ENCODE measurements at regions of chr4 and their contacts with region 1.

Region 1: DNA sequence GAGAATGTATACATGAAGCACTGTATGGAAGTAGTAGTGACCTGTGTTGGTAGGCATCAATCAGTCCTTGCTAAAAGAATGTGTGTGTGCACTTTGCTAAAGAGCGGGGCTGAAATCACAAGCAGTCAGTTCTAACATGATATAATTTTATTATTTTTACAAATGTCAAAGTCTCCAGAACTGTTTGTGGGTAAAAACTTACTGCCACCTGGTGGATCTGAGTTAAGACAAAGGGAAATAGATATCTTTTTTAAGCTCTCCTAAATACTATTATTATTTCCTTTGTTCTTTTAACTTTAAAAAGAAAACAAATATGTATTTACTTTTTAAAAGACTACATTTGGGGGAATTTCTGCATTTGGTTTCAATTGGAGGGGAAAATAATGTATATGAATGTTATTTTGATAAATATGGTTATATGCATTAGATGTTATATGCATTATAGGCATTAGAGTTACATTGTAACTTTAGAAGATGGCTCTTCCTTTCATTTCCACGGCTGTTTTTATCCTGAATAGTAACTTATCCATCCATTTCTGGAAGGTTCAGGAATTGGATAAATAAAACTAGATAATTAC is 7.8 kb upstream of the CLOCK start:
- DNase-seq: no peak
- H3K4me3 ChIP-seq: no peak overlapping the region
- H3K27me3 ChIP-seq: 0 out of 2 replicates have a peak, but pooled peaks cover 2% of the 10 kb centered on the region
- CTCF ChIP-seq: peak; percentile 51

Region 2: DNA sequence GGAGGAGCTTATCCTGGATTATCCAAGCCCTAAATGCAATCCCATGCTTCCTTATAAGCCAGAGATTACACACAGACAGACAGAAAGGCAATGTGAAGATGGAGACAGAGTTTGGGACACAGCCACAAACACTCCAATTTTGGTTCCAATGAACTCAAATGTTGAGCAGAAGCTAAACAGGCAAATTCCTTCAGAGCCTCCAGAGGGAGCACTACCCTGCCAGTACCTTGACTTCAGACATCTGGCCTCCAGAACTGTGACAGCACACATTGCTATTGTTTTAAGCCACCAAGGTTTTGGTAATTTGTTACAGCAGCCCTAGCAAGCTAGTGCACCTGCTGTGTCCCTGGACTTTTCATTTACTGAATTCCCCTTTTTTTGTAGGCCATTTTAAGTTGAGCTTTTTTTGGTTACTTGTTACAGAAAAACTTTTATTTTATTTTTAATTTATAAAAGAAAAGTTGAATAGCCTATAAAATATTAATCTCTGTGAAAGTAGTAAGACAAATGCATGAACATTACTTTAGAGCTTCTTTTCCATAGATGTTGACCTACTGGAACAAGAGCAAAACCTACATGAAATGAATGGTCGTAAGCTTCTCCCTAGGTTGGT is 241.9 kb before region 1 on chr4:
- CTCF ChIA-PET with region 1: interaction called, 19 read pairs
- POLR2A ChIA-PET with region 1: no interaction called
- DNase-seq: peak; percentile 9
- H3K4me3 ChIP-seq: no peak overlapping the region
- H3K27me3 ChIP-seq: peaks cover 1% of the 10 kb centered on the region; the same call in 1 of the 2 replicates
- CTCF ChIP-seq: peak; percentile 87

Region 3: GRCh38 chr4:55444827-55445226 is 109.7 kb before region 1 on chr4:
- CTCF ChIA-PET with region 1: interaction called, 11 read pairs
- POLR2A ChIA-PET with region 1: no interaction called
- DNase-seq: no peak
- H3K4me3 ChIP-seq: no peak overlapping the region
- H3K27me3 ChIP-seq: no peaks in the 10 kb centered on the region
- CTCF ChIP-seq: peak; percentile 49

Region 4: GRCh38 chr4:55509266-55509665 is 45.3 kb before region 1 on chr4:
- CTCF ChIA-PET with region 1: no interaction called
- POLR2A ChIA-PET with region 1: no interaction called
- DNase-seq: no peak
- H3K4me3 ChIP-seq: no peak overlapping the region
- H3K27me3 ChIP-seq: no peaks in the 10 kb centered on the region
- CTCF ChIP-seq: no peak

Measured in BJ (cell line).